ENCODE measurements at regions of chr17 and their contacts with region 1.

Region 1: GRCh38 chr17:46044286-46044928 is 45.4 kb downstream of the STH start:
- DNase-seq: peak; percentile 86
- H3K4me3 Mint-ChIP-seq: no peak overlapping the region
- H3K27ac Mint-ChIP-seq: peak overlapping the region; percentile 61
- H3K4me1 Mint-ChIP-seq: peaks cover 21% of the 10 kb centered on the region
- H3K27me3 Mint-ChIP-seq: no peaks in the 10 kb centered on the region
- CTCF ChIP-seq: peak; percentile 70

Region 2: DNA sequence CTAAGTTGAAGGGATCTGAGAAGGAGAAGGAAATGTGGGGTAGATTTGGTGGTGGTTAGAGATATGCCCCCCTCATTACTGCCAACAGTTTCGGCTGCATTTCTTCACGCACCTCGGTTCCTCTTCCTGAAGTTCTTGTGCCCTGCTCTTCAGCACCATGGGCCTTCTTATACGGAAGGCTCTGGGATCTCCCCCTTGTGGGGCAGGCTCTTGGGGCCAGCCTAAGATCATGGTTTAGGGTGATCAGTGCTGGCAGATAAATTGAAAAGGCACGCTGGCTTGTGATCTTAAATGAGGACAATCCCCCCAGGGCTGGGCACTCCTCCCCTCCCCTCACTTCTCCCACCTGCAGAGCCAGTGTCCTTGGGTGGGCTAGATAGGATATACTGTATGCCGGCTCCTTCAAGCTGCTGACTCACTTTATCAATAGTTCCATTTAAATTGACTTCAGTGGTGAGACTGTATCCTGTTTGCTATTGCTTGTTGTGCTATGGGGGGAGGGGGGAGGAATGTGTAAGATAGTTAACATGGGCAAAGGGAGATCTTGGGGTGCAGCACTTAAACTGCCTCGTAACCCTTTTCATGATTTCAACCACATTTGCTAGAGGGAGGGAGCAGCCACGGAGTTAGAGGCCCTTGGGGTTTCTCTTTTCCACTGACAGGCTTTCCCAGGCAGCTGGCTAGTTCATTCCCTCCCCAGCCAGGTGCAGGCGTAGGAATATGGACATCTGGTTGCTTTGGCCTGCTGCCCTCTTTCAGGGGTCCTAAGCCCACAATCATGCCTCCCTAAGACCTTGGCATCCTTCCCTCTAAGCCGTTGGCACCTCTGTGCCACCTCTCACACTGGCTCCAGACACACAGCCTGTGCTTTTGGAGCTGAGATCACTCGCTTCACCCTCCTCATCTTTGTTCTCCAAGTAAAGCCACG is 17.1 kb before region 1 on chr17:
- CTCF ChIA-PET with region 1: interaction called, 12 read pairs
- POLR2A ChIA-PET with region 1: interaction called, 3 read pairs
- intact Hi-C with region 1: no loop called
- DNase-seq: no peak
- H3K4me3 Mint-ChIP-seq: no peak overlapping the region
- H3K27ac Mint-ChIP-seq: no peak overlapping the region
- H3K4me1 Mint-ChIP-seq: no peaks in the 10 kb centered on the region
- H3K27me3 Mint-ChIP-seq: no peaks in the 10 kb centered on the region
- CTCF ChIP-seq: no peak

Region 3: GRCh38 chr17:46056800-46057304 is 12.4 kb after region 1 on chr17:
- CTCF ChIA-PET with region 1: interaction called, 16 read pairs
- POLR2A ChIA-PET with region 1: interaction called, 12 read pairs
- intact Hi-C with region 1: no loop called
- DNase-seq: peak; percentile 60
- H3K4me3 Mint-ChIP-seq: no peak overlapping the region
- H3K27ac Mint-ChIP-seq: no peak overlapping the region
- H3K4me1 Mint-ChIP-seq: peaks cover 9% of the 10 kb centered on the region
- H3K27me3 Mint-ChIP-seq: no peaks in the 10 kb centered on the region
- CTCF ChIP-seq: no peak

Region 4: DNA sequence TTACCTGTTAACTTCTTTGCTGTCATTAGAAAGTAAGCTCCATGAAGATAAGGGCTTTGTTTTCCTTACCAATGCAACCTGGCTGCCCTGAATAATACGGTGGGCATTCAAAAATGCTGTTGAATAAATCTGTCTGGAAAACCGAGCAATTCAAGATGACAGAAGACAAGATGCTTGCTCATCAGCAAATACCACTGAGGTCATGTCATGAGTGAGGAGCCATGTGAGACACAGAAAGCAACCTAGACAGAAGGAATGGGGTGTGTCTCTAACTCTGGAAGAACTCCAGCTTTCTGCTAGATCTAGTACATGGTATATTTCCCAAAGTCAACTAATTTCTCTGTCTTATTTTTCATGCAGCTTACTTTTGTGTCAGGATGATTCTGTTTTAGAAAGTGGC is 18.8 kb after region 1 on chr17:
- CTCF ChIA-PET with region 1: interaction called, 16 read pairs
- POLR2A ChIA-PET with region 1: interaction called, 12 read pairs
- intact Hi-C with region 1: no loop called
- DNase-seq: peak; percentile 80
- H3K4me3 Mint-ChIP-seq: no peak overlapping the region
- H3K27ac Mint-ChIP-seq: peak overlapping the region; percentile 75
- H3K4me1 Mint-ChIP-seq: peaks cover 14% of the 10 kb centered on the region
- H3K27me3 Mint-ChIP-seq: no peaks in the 10 kb centered on the region
- CTCF ChIP-seq: no peak

Region 5: DNA sequence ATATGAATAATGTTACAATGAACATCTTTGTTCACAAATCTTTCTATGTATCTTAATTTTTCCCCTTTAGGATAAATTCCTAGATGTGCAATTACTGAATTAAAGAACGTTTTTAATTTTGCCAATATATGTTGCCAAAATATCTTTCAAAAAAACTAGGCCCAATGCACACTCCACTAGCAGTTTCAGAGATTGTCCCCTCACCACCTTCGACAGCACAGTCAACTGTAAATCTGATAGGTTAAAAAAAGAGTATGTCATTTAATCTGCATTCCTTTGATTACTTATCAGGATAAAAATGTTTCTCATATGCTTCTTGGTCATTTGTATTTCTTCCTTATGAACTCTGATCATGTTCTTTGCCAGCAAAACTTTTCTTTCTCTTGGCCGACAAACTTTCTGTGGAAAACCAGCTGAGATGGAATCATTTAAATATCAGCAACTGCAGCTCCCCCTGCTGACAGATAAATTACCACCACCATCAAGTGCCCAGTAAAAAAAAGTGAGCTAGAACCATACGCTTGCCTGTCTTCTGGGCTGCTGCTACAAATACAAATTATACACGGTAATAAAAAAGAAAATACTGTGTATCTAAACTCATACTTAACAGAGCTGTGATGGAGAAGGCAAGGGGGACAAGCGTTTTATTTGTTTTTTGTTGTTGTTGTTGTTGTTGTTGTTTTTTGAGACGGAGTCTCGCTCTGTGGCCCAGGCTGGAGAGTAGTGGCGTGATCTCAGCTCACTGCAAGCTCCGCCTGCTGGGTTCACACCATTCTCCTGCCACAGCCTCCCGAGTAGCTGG is 168.4 kb after region 1 on chr17:
- CTCF ChIA-PET with region 1: interaction called, 11 read pairs
- POLR2A ChIA-PET with region 1: interaction called, 5 read pairs
- intact Hi-C with region 1: loop called (anchors 1 kb)
- DNase-seq: peak; percentile 85
- H3K4me3 Mint-ChIP-seq: no peak overlapping the region
- H3K27ac Mint-ChIP-seq: no peak overlapping the region
- H3K4me1 Mint-ChIP-seq: peaks cover 12% of the 10 kb centered on the region
- H3K27me3 Mint-ChIP-seq: no peaks in the 10 kb centered on the region
- CTCF ChIP-seq: peak; percentile 75